ENCODE measurements at regions of chr9 and their contacts with region 1.

Region 1: GRCh38 chr9:112898872-112899311 is 8.2 kb upstream of the SLC46A2 start:
- DNase-seq: no peak
- H3K27ac ChIP-seq: no peak overlapping the region
- CTCF ChIP-seq: no peak

Region 2: DNA sequence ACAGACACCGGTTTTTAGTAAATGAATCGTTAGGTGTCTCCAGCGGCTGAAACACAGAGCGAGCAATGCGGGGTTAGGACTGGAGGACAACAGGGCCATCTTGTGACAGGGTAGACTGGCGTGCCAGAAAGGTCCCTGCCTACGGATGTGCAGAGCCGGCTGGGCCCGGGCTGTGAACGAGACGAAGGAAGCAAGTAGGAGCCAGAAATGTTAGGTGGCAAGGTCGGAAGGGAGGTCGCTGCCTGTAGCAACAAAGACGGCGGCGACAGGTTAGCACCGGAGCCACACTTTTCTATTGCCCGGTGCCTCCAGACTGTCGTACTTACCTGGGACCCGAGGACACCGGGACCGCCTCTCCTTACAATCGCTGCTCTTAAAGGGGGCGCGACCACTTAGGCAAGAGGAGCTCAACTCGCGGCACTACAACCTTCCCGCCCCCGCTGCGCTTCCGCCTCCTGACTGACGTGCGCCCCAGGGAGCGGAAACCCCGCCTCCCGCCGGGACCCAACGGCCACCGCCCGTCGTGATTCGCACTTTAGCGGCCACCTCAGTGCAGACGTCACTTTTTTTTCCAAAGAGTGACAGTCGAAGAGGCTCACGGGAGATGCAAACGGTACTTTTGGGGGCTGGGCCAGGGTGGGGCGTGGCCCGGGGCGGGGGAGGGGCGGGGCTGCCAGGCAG is 181.1 kb before region 1 on chr9 and contains the start of gene INIP:
- CTCF ChIA-PET with region 1: no interaction called
- POLR2A ChIA-PET with region 1: no interaction called
- DNase-seq: peak; percentile 99
- H3K27ac ChIP-seq: peak within 1 kb of the TSS; percentile 90
- CTCF ChIP-seq: peak; percentile 52

Region 3: GRCh38 chr9:112844771-112845542 is 53.9 kb before region 1 on chr9:
- CTCF ChIA-PET with region 1: interaction called, 38 read pairs
- POLR2A ChIA-PET with region 1: no interaction called
- DNase-seq: peak; percentile 92
- H3K27ac ChIP-seq: no peak overlapping the region
- CTCF ChIP-seq: peak; percentile 100

Region 4: DNA sequence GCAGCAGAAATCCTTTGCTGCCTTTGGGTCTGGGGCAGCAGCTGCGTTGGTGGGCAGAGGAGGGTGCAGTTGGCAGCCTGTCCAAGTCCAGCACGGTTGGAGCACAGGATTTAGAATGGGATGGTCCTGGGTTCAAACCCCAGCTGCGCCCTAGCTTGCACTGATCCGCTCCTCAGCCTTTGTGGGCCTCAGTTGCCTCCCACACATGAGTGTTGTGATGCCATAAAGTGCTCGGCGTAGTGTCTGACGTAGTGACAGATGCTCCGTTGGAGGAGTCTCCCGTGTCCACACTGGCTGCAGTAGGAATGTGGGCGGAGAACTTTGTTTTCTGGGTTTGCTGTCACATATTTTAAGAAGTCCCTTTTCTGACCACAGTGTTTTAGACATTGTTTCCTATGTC is 44.2 kb before region 1 on chr9:
- CTCF ChIA-PET with region 1: interaction called, 10 read pairs
- POLR2A ChIA-PET with region 1: no interaction called
- DNase-seq: no peak
- H3K27ac ChIP-seq: no peak overlapping the region
- CTCF ChIP-seq: no peak

Region 5: DNA sequence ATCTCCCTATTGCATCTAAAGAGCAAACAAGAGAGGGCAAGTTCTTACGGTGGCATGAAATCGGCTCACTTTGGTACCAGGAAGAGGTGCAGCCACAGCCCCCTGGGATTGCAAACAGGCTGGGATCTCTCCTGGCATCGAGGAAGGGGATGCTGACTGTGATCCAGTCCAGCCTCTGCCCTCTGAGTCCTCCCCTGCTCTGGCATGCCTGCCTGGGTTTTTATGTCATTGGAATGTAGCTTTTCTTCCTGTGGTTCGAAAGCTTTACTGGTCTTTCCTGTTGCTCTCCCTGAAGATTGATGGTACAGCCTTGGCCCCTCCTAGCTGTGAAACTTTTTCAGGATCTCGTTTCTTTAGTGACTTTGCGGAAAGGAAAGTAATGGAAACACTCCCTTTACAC is 14.8 kb before region 1 on chr9:
- CTCF ChIA-PET with region 1: interaction called, 10 read pairs
- POLR2A ChIA-PET with region 1: no interaction called
- DNase-seq: peak; percentile 87
- H3K27ac ChIP-seq: no peak overlapping the region
- CTCF ChIP-seq: no peak

Region 6: GRCh38 chr9:113401027-113401792 is 502.3 kb after region 1 on chr9 and contains the start of gene ALAD:
- CTCF ChIA-PET with region 1: no interaction called
- POLR2A ChIA-PET with region 1: no interaction called
- DNase-seq: peak; percentile 100
- H3K27ac ChIP-seq: peak within 1 kb of the TSS; percentile 65
- CTCF ChIP-seq: peak; percentile 100

Region 7: DNA sequence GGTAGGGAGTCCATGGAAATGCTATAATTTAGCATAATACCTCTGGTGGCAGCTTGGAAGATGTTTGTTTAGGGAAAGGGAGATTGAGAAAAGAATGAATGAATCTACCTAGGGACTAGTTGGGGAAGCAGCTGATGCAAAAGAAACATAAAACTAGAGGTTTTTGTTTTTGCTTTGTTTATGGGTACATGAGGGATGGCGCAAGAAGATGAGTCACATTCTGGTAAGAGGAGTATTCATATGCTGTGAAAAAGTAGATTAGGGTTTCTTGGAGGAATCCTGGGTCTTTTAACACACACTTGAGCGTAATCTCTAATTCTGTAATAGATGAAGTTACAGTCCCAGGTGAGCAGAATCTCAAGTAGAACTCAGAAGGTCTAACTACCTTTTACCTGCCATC is 528.7 kb after region 1 on chr9:
- CTCF ChIA-PET with region 1: no interaction called
- POLR2A ChIA-PET with region 1: no interaction called
- DNase-seq: no peak
- H3K27ac ChIP-seq: no peak overlapping the region
- CTCF ChIP-seq: no peak

Measured in RWPE1 (cell line).